Head of caudate nucleus (tissue), 42 donors: ENCODE measurements at regions of chr1 and their contacts with region 1.

Region 1: DNA sequence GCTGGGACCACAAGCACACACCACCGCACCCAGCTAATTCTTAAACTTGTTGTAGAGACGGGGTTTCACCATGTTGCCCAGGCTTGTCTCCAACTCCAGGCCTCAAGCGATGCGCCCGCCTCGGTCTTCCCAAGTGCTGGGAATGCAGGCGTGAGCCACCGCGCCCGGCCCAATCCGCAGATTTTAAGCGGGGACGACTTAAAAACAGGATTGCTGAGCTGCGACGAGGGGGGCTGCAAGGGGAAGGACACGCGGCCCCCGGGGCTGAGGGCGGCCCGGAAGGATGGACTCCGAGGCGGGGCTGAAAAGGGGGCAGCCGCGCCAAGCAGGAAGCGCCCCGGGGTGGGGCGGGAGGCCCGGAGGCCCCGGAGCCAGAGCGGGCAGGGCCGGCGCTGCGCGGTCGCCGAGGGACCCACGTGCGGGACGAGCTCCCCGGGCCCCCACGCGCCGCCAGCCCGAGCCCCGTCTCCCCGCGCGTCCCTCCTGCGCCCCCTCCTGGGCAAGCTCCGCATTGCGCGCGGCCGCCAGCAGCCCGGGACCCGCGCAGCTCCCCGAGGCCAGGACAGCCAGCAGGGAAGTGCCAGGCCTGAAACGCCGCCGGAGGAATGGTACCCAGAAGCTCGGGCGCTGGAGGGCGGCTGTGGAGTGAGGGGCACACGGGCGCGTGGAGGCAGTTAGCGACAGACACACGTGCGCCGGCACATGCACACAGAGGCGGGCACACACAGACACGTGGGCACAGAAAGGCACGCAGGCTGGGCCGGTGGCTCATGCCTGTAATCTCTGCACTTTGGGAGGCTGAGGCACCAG is 5.5 kb upstream of the PRKCZ start:
- DNase-seq: peak; percentile 23 to 90 (median 80)

Region 2: DNA sequence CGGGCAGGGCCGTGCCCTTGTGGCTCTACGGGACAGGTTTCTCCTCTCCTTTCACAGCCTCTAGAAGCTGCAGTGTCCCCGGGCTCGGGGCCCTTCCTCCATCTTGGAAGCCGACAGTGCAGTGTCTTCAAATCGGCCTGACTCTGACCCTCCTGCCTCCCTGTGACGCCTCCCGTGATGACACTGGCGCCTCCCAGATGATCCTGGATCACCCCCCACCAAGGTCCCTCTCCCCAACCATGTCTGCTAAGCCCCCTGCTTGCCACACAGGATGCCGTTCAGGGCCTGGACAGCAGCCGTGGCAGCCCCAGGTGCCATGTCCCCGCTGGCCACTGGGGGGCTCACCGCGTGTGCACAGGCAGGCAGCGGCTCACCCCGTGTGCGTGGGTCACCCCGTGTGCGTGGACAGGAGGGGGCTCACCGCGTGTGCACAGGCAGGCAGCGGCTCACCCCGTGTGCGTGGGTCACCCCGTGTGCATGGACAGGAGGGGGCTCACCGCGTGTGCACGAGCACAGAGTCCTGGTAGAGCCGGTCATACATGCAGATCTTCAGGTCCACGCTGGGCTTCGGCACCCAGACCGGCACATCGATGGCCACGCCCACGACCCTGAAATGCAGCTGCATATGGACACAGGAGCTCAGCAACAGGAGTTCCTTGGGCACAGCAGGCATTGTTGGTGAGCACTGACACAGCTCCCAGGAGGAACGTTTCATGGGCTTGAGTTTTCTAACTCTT is 100.7 kb before region 1 on chr1:
- intact Hi-C with region 1: loop called (anchors 5 kb)
- DNase-seq: peak; percentile 21 to 87 (median 66)